ENCODE measurements at regions of chr17 and their contacts with region 1.

Region 1: DNA sequence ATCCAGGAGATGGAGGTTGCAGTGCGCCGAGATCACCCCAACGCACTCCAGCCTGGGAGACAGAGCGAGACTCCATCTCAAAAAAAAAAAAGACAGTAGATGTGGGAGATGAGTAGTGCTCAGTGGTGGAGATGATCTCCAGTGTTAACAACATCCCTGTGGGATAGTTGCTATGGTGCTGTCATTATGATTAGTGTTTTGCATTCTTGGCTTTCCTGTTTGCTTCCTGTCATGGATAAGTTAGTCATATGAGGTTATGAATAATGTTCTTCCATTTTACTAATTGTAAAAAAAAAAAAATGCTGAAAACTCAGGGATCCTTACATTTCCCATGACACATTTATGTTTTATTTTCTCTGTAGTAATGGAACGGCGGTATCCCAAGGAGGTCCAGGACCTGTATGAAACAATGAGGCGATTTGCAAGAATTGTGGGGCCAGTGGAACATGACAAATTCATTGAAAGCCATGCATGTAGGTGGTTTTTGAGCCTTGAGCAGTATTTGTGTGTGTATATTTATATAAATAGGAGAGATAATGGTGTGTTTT is 24.5 kb upstream of the DUSP14 start:
- DNase-seq: no peak
- ATAC-seq: no peak
- H3K4me3 ChIP-seq: no peak overlapping the region
- H3K27ac ChIP-seq: no peak overlapping the region
- H3K4me1 ChIP-seq: no peaks in the 10 kb centered on the region
- H3K27me3 ChIP-seq: no peaks in the 10 kb centered on the region
- CTCF ChIP-seq: no peak

Region 2: DNA sequence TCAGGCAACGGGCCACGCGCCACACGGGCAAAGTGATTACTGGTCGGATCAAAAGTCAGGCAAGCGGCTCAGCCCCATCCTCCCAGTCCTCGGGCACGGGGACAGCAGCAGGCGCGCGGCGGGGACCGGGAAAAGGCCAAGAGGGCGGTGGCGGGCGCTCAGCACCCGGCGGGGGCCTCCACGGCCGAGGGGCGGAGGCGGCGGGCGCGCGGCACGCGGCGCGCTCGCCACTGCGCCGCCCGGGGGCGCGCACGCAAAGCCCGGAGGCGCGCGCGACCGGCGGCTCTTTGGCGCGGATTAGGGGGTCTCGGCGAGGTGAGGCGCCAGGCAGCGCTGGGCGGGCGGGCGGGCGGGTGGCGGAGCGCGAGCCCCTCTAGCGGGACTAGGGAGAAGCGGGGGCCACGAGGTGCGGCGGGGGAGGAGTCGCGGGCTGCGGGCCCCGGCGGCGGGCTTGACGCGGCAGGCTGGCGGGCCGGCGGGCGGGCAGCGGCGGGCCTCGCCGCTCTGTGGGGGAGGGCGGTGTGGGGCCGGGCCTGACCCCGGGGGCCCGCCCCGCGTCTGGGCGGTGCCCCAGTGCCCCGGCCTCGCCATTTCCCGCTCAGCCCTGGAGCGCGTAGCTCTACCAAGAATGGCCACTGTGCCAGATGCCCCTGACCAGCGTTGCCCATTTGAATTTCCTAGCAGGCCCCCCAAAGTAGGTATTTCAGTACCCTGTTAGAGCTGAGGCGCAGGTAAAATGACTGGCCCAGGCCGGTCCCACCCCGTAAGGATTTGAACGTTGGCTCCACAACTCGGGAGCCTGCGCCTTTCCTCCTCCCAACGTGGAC is 58.3 kb before region 1 on chr17 and contains the starts of genes ACACA and TADA2A:
- intact Hi-C with region 1: loop called in 1 of 3 experiments (anchors 10 kb)
- DNase-seq: peak; percentile 81 to 91 (median 82)
- ATAC-seq: peak; percentile 94 to 98 (median 95)
- H3K4me3 ChIP-seq: peak within 1 kb of the TSS; percentile 56 to 86 (median 68)
- H3K27ac ChIP-seq: peak within 1 kb of the TSS; percentile 71 to 90 (median 84)
- H3K4me1 ChIP-seq: peaks cover 0 to 6% (median 0%) of the 10 kb centered on the region in 3 donors
- H3K27me3 ChIP-seq: no peaks in the 10 kb centered on the region
- CTCF ChIP-seq: no peak
- total RNA-seq, gene ACACA: 9.1 to 31.6 (median 14.9) TPM
- total RNA-seq, gene TADA2A: 7.7 to 11.9 (median 10.1) TPM